Right cardiac atrium (tissue), 5 donors: ENCODE measurements at regions of chr6 and their contacts with region 1.

Region 1: DNA sequence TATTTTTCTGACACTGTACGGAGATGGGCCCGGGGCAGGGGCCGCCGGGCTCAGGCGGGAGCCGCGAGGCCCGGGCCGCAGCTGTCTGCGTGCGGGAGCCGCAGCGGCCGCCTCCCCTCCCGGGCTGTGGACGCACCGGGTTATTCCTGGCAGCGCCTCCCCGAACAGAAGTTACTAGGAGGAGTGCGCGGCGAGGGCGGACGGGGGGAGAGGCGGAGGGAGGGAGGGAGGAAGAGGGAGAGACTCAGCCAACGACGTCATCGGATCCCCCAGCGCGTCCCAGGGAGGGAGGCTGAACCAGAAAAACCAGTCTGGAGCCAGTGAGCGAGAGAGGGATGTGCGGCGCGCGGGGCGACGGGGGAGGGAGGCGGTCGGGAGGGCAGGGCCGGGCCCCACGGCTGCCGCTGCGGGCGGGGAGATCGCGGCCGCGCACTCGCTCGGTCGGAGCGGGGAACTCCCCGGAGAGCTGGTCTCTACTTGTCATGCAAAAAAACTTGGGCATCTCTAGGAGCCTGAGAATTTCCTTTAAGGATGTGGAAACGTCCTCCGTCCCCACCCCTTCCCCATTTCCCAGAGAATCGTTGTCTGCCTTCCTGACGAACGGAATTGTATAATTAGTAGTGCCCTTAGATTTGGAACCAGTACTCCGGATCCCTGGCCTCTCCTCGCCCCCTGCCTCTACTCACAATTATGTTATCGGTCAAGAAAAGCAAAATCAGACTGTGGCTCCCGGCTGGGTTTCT is 1.4 kb upstream of the HIVEP2 start:
- DNase-seq: peak; percentile 99
- ATAC-seq: peak; percentile 91 to 93
- H3K4me3 ChIP-seq: peak overlapping the region; percentile 88
- H3K27ac ChIP-seq: peak overlapping the region; percentile 99
- H3K4me1 ChIP-seq: no peaks in the 10 kb centered on the region
- H3K27me3 ChIP-seq: no peaks in the 10 kb centered on the region

Region 2: GRCh38 chr6:142763205-142763604 is 183.1 kb before region 1 on chr6:
- intact Hi-C with region 1: loop called in 1 of 4 experiments (anchors 10 kb)
- DNase-seq: no peak
- ATAC-seq: no peak
- H3K4me3 ChIP-seq: no peak overlapping the region
- H3K27ac ChIP-seq: no peak overlapping the region
- H3K4me1 ChIP-seq: no peaks in the 10 kb centered on the region
- H3K27me3 ChIP-seq: no peaks in the 10 kb centered on the region

Region 3: DNA sequence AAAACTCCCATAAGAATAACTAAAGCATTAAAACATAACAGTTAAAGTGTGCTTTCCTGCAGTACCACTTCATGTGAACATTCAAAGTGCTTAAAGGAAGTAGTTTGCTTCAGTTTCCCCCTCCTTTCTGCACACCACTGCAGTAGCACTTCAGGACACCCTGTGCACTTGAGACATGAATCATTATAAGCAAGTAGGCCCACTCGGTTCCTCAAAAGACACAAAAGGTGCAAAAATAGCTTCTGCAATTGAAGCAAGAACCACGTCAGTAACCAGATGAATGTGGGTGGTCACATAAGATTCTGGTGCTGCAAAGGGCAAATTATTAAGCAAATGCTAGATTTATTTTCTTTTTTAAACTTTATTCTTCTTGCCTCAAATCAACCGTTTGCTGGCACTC is 162.0 kb before region 1 on chr6:
- intact Hi-C with region 1: no loop called
- DNase-seq: no peak
- ATAC-seq: no peak
- H3K4me3 ChIP-seq: no peak overlapping the region
- H3K27ac ChIP-seq: no peak overlapping the region
- H3K4me1 ChIP-seq: peaks cover 1% of the 10 kb centered on the region
- H3K27me3 ChIP-seq: no peaks in the 10 kb centered on the region

Region 4: DNA sequence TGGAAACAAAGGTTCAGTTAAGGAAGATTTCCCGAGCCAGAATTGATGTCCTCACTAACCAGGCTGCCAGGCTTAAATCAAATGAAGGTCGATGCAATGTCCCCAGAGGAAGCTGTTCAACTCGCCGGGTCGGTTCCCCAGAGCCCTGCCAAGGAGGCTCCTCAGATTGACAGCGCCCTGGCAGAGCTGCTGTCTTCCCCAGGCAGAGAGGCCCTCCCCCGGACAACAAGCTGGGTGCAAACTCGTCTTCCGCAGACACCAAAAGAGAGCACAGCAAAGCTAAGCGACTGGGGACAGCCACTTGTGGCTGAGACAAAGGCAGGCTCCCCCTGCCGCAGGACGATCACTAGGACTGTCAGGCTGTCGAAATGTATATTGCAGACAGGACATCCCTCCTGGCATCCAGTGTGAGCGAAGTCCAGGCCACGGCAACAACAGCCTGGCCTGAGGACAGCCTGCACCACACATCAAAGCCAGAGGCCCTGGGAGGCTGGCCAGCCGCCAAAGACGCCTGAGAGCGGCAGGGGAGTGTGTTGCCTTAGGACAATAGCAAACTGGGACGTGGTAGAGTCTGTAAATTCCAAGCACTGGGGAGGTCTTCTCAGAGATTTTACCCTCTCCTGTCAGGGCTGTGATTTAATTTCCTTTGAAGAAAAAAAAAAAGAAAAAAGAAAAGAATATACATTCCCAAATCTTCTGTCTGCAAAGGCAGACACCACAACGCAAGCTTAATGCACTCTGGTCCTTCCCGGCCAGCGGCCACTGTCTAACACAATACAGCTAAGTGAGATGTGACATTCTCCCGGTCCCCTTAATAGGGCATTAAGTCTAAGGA is 100.5 kb before region 1 on chr6:
- intact Hi-C with region 1: loop called in 1 of 4 experiments (anchors 10 kb)
- DNase-seq: peak; percentile 90 to 96 (median 95)
- ATAC-seq: peak; percentile 97 to 98
- H3K4me3 ChIP-seq: peak overlapping the region; percentile 28
- H3K27ac ChIP-seq: peak overlapping the region; percentile 98
- H3K4me1 ChIP-seq: peaks cover 11% of the 10 kb centered on the region
- H3K27me3 ChIP-seq: no peaks in the 10 kb centered on the region

Region 5: GRCh38 chr6:142893075-142893474 is 53.3 kb before region 1 on chr6:
- intact Hi-C with region 1: loop called in 3 of 4 experiments (anchors 10 kb)
- DNase-seq: no peak
- ATAC-seq: no peak
- H3K4me3 ChIP-seq: no peak overlapping the region
- H3K27ac ChIP-seq: no peak overlapping the region
- H3K4me1 ChIP-seq: no peaks in the 10 kb centered on the region
- H3K27me3 ChIP-seq: no peaks in the 10 kb centered on the region

Region 6: GRCh38 chr6:143457563-143458359 is 511.4 kb after region 1 on chr6:
- intact Hi-C with region 1: no loop called
- DNase-seq: no peak
- ATAC-seq: no peak
- H3K4me3 ChIP-seq: no peak overlapping the region
- H3K27ac ChIP-seq: no peak overlapping the region
- H3K4me1 ChIP-seq: no peaks in the 10 kb centered on the region
- H3K27me3 ChIP-seq: no peaks in the 10 kb centered on the region